A673 (cell line): ENCODE measurements at regions of chr15 and their contacts with region 1.

Region 1: GRCh38 chr15:74053941-74054529 is 28.3 kb downstream of the GOLGA6A start:
- DNase-seq: peak; percentile 84
- H3K4me3 ChIP-seq: peak overlapping the region; percentile 17
- H3K27ac ChIP-seq: no peak overlapping the region
- H3K4me1 ChIP-seq: no peaks in the 10 kb centered on the region
- H3K27me3 ChIP-seq: no peaks in the 10 kb centered on the region
- CTCF ChIP-seq: peak; percentile 56

Region 2: DNA sequence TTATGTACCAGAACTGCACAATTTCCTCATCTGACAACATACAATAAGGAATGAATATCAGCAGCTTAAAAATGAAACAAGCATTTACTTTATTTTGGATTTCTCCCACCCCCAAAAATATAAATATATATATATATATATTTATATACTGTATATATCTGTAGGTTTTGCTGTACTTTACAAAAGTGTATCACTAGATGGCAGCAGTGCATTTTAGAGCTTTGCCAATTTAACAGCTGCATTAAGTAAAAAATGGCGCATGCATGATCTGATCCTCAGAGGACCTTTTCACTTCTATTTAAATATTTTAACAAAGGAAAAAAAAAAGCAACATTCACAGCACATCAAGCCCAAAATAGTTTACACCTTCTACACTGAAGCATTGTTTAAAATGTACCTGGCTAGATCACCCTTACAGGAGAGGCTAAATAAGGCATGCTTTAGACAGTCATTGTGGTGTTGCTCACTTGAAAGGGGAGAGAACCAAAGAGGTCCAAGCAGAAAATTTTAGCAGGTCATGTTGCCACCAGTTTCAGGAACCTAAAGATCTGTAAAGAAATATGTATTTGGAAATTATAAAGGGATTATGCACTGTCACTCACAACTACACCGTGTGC is 493.4 kb before region 1 on chr15:
- CTCF ChIA-PET with region 1: no interaction called
- POLR2A ChIA-PET with region 1: no interaction called
- intact Hi-C with region 1: no loop called
- DNase-seq: peak; percentile 83
- H3K4me3 ChIP-seq: no peak overlapping the region
- H3K27ac ChIP-seq: no peak overlapping the region
- H3K4me1 ChIP-seq: peaks cover 8% of the 10 kb centered on the region
- H3K27me3 ChIP-seq: no peaks in the 10 kb centered on the region
- CTCF ChIP-seq: peak; percentile 61

Region 3: GRCh38 chr15:73888224-73889041 is 165.6 kb before region 1 on chr15:
- CTCF ChIA-PET with region 1: no interaction called
- POLR2A ChIA-PET with region 1: interaction called, 10 read pairs
- intact Hi-C with region 1: no loop called
- DNase-seq: no peak
- H3K4me3 ChIP-seq: no peak overlapping the region
- H3K27ac ChIP-seq: no peak overlapping the region
- H3K4me1 ChIP-seq: no peaks in the 10 kb centered on the region
- H3K27me3 ChIP-seq: no peaks in the 10 kb centered on the region
- CTCF ChIP-seq: no peak

Region 4: DNA sequence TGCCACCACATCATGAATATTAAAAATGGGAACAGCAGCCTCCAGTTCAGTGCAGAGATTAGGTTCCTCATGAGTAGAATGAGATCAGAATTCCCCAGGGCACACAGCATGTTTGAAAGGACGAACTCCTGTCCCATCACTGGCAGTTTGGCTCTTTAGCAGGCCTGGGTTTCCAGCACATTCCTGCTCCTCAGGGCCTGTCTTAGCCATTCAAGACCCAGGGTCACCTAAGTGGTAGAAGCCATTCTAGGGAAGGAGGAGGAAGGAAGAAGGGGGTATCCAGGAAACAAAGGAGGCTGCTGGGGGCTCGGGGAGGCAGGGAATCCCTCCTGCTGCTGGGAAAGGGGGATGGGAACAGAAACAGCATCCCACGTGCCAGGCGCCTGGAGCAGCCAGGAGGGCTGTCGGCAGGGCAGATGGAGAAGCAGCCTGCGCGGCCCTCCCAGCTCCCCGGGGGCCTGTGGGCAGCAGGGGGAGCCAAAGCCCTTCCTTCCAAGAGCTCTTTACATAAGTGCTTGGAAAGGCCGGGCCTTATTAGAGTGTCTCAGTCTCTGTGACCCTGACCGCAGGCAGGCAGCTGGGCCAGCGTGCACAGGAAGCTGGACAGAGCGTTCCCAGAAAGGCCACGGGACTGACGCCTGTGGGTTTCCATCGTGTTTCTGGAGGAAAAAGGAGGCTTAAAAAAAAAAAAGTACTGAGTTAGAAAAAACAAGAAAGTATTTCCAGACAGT is 103.0 kb before region 1 on chr15:
- CTCF ChIA-PET with region 1: interaction called, 11 read pairs
- POLR2A ChIA-PET with region 1: no interaction called
- intact Hi-C with region 1: no loop called
- DNase-seq: peak; percentile 97
- H3K4me3 ChIP-seq: no peak overlapping the region
- H3K27ac ChIP-seq: peak overlapping the region; percentile 75
- H3K4me1 ChIP-seq: peaks cover 23% of the 10 kb centered on the region
- H3K27me3 ChIP-seq: no peaks in the 10 kb centered on the region
- CTCF ChIP-seq: peak; percentile 85

Region 5: DNA sequence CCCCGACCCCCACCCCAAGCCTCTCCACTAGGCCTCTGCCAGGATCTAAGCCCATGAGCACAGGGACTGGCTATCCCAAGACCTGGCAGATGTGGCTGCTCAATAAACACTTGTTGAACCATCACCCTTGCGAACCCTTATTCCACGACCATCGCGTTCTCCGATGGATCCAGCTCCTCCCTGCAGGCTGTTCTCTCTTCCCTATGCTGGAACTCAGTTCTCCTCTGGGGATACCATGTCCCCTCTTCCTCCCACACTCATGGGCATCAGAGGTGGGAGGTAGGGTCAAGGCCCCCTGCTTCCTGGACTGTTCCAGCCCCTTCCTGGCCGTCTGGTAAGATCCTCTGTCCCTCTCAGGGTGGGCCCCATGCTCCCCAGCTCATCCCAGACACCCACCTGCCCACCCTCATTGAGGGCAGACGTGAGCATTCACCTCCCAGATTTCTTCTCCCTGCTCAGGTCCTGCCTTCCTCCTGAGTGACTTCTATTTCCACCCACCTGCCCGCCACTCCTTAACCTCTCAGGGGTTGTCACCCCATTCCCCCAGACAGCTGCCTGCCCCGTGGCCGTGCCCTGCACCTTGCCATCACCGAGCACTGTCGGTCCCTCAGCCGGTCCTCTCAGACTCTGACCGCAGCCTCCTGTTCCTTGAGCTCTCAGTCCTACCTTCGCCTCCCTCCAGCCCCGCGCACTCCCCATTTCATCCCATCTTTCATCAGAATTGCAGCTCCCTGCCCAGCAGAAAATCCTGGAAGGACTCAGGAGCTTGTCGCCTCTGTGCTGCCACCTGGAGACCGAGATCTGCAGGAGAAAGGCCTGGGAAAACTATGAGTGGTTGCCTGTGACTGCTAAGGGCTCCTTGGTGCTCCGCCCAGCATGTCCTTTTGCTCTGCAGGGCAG is 17.5 kb before region 1 on chr15:
- CTCF ChIA-PET with region 1: interaction called, 10 read pairs
- POLR2A ChIA-PET with region 1: no interaction called
- intact Hi-C with region 1: no loop called
- DNase-seq: peak; percentile 66
- H3K4me3 ChIP-seq: no peak overlapping the region
- H3K27ac ChIP-seq: no peak overlapping the region
- H3K4me1 ChIP-seq: peaks cover 19% of the 10 kb centered on the region
- H3K27me3 ChIP-seq: no peaks in the 10 kb centered on the region
- CTCF ChIP-seq: peak; percentile 61

Region 6: GRCh38 chr15:74307827-74308644 is 254.0 kb after region 1 on chr15:
- CTCF ChIA-PET with region 1: interaction called, 16 read pairs
- POLR2A ChIA-PET with region 1: no interaction called
- intact Hi-C with region 1: no loop called
- DNase-seq: peak; percentile 86
- H3K4me3 ChIP-seq: no peak overlapping the region
- H3K27ac ChIP-seq: no peak overlapping the region
- H3K4me1 ChIP-seq: peaks cover 28% of the 10 kb centered on the region
- H3K27me3 ChIP-seq: no peaks in the 10 kb centered on the region
- CTCF ChIP-seq: peak; percentile 85

Region 7: GRCh38 chr15:74322181-74323076 is 268.4 kb after region 1 on chr15:
- CTCF ChIA-PET with region 1: interaction called, 20 read pairs
- POLR2A ChIA-PET with region 1: no interaction called
- intact Hi-C with region 1: loop called (anchors 2 kb)
- DNase-seq: peak; percentile 76
- H3K4me3 ChIP-seq: no peak overlapping the region
- H3K27ac ChIP-seq: no peak overlapping the region
- H3K4me1 ChIP-seq: peaks cover 29% of the 10 kb centered on the region
- H3K27me3 ChIP-seq: no peaks in the 10 kb centered on the region
- CTCF ChIP-seq: peak; percentile 92